ENCODE measurements at regions of chr11 and their contacts with region 1.

Region 1: DNA sequence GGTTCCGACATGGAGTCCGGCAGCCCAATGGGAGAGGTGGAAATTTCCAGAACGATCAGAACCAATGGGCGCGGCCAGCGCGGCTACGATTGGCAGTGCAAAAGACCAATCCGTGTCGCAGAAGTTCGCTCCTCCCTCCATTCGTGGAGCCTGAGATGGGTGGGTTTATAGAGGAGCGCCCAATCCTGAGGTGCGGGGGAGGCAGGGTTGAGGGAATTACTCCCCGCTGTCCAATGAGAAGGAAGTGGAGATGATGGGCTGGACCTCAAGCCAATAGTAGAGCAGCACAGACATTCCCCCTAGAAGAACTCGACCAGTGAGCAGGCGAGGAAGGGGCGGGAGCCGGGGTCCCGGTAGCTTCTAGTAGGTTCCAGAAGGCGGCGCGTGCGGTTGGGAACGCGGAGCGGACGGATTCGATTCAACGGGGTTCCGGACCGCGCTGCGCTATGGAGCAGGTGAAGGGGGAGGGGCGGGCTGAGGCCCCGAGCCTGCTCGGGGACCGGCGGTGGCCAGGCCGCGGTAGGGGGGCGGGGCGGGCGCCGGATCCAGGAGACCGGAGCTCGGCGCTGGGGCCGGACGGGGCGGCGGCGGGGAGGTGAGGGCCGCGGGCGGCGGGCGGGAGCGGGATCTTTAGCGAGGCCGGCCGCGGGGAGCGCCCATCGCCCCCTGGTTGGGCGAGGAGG is at the start of gene STIP1:
- DNase-seq: peak; percentile 97 to 100
- ATAC-seq: peak; percentile 86 to 94 (median 91)
- H3K4me3 ChIP-seq: peak within 1 kb of the TSS in 9 of 10 donors; percentile 32 to 89 (median 66)
- H3K27ac ChIP-seq: peak within 1 kb of the TSS; percentile 90 to 98 (median 94)
- H3K4me1 ChIP-seq: peaks cover 12 to 52% (median 34%) of the 10 kb centered on the region in 9 donors
- H3K27me3 ChIP-seq: no peaks in the 10 kb centered on the region
- CTCF ChIP-seq: peak in 7 of 9 donors; percentile 14 to 66 (median 40)
- total RNA-seq, gene STIP1: 67.4 to 105 (median 87.9) TPM

Region 2: DNA sequence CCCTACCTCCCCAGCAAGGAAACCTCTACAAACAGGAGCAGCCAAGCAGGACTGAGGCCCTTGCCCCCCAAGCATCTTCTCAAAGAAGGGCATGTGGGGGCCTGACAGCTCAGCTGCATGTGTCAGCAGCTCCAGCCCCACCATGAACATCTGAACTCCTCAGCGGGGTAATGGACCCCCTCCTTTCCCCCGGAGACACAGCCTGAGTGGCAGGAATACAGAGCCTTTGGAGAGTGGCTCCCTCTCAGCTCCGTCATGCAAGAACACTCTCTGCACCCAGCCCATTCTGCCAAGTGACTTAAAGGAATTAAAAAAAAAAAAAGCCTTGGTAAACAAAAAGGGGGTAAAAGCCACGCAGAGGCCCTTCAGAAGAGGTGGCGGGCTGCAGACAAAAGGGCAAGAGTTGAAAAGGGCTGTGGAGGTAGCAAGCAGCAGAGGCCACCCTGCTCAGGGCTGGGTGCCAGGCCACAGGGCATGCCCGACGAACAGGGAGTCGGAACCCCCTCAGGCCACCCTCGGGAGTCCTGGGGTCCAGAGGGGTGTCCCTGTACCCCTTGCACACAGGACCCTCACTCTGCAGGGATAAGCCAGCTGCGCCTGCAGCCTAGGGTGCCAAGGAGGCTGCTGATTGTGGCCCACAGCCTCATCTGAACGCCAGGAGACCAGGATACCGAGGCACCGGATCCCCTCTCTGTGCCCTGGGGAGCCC is 82.5 kb before region 1 on chr11:
- intact Hi-C with region 1: no loop called
- DNase-seq: no peak
- ATAC-seq: peak in 1 of 8 donors; percentile 19
- H3K4me3 ChIP-seq: no peak overlapping the region
- H3K27ac ChIP-seq: no peak overlapping the region
- H3K4me1 ChIP-seq: no peaks in the 10 kb centered on the region
- H3K27me3 ChIP-seq: no peaks in the 10 kb centered on the region
- CTCF ChIP-seq: no peak

Region 3: GRCh38 chr11:64141081-64141783 is 44.7 kb before region 1 on chr11:
- intact Hi-C with region 1: no loop called
- DNase-seq: no peak
- ATAC-seq: peak in 1 of 8 donors; percentile 9
- H3K4me3 ChIP-seq: no peak overlapping the region
- H3K27ac ChIP-seq: no peak overlapping the region
- H3K4me1 ChIP-seq: peaks cover 0 to 7% (median 0%) of the 10 kb centered on the region in 9 donors
- H3K27me3 ChIP-seq: no peaks in the 10 kb centered on the region
- CTCF ChIP-seq: no peak

Region 4: DNA sequence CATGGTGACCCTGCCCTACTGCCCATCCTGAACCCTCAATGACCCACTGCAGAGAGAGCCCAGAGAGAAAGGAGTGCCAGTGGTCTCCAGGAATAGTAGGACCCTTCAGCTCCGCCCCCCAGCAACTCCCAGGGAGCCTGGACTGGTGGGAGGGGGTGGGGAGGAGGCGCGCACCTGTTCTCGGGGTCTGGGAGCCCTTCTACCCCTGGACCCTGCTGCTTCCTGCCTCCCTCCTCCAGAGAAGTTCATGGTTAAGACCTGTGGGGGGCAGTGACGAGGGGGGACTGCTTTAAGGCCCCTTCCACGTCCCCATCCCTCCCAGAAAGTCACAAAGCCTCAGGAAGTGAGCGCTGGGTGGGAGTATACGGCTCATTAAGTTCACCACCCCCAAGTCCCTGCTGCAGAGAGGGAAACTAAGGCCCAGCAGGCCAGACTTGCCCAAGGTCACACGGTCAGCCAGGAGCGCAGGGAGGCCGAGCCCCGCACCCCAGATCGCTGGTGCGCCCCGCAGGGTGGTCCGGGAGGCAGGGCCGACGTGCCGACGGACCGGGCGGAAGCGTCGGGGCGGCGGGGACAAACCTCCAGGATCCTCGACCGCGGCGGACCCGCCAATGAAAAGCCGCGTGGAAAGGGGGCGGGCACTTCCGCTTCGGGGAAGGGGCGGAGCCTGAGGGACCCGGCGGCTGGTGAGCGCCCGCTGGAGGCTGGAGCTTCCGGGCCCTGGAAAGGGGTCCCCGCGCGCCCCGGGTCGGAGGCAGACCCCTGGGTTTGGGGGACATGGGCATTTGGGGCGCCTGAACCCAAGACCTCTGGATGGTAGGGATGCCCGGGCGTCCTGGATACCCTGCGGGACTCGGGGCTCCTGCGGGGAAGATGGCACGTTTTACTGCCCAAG is 39.9 kb after region 1 on chr11 and contains the starts of genes NUDT22 and TRPT1:
- intact Hi-C with region 1: loop called in 2 of 10 experiments (anchors 2 to 5 kb)
- DNase-seq: peak; percentile 93 to 94
- ATAC-seq: peak; percentile 81 to 88 (median 85)
- H3K4me3 ChIP-seq: peak within 1 kb of the TSS; percentile 64 to 95 (median 76)
- H3K27ac ChIP-seq: peak within 1 kb of the TSS; percentile 90 to 96 (median 95)
- H3K4me1 ChIP-seq: peaks cover 16 to 58% (median 40%) of the 10 kb centered on the region in 9 donors
- H3K27me3 ChIP-seq: no peaks in the 10 kb centered on the region
- CTCF ChIP-seq: peak in 2 of 9 donors; percentile 9 to 37
- total RNA-seq, gene NUDT22: 57.3 to 85.6 (median 71.0) TPM
- total RNA-seq, gene TRPT1: 50.5 to 81.7 (median 61.4) TPM

Region 5: GRCh38 chr11:64516226-64516625 is 330.3 kb after region 1 on chr11:
- intact Hi-C with region 1: no loop called
- DNase-seq: no peak
- ATAC-seq: no peak
- H3K4me3 ChIP-seq: no peak overlapping the region
- H3K27ac ChIP-seq: no peak overlapping the region
- H3K4me1 ChIP-seq: no peaks in the 10 kb centered on the region
- H3K27me3 ChIP-seq: peaks cover 0 to 64% (median 37%) of the 10 kb centered on the region in 7 donors
- CTCF ChIP-seq: peak in 1 of 9 donors; percentile 34

Measured in heart right ventricle (tissue), 16 donors.